Activated CD4-positive, alpha-beta T cell treated with anti-CD3 and anti-CD28 coated beads for 36 hours (primary cell): ENCODE measurements at regions of chr15 and their contacts with region 1.

Region 1: DNA sequence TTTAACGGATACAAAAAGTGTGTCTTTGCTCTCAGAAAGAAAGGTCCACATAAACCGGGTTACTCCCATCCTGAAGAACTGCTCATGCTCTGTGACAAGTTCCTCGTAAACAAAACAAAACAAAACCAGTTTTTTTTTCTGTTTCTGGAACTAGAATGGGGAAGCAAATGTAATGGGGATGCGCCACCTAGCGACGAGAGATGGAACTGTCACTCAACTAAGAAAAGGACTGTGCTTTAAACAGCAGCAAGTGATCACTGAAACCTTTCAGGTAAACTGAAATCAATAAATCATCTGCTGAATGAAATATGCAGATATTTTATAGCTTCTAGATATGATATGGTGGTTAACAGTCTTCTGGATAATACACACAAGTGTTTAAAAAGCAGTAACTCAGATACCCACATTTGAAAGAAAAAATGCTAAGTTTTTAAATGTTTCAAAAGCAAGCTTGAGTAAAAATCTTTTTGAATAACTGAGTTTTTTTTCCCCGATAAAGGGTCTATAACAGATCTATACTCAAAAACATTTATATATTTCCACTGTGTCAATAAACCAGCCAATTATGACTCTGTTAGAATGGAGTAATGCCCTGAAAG is 10.9 kb downstream of the TM2D3 start:
- DNase-seq: peak; percentile 85
- ATAC-seq: peak; percentile 60
- H3K4me3 Mint-ChIP-seq: no peak overlapping the region
- H3K27ac Mint-ChIP-seq: peak overlapping the region; percentile 78
- H3K4me1 Mint-ChIP-seq: peaks cover 33% of the 10 kb centered on the region
- H3K27me3 Mint-ChIP-seq: no peaks in the 10 kb centered on the region

Region 2: DNA sequence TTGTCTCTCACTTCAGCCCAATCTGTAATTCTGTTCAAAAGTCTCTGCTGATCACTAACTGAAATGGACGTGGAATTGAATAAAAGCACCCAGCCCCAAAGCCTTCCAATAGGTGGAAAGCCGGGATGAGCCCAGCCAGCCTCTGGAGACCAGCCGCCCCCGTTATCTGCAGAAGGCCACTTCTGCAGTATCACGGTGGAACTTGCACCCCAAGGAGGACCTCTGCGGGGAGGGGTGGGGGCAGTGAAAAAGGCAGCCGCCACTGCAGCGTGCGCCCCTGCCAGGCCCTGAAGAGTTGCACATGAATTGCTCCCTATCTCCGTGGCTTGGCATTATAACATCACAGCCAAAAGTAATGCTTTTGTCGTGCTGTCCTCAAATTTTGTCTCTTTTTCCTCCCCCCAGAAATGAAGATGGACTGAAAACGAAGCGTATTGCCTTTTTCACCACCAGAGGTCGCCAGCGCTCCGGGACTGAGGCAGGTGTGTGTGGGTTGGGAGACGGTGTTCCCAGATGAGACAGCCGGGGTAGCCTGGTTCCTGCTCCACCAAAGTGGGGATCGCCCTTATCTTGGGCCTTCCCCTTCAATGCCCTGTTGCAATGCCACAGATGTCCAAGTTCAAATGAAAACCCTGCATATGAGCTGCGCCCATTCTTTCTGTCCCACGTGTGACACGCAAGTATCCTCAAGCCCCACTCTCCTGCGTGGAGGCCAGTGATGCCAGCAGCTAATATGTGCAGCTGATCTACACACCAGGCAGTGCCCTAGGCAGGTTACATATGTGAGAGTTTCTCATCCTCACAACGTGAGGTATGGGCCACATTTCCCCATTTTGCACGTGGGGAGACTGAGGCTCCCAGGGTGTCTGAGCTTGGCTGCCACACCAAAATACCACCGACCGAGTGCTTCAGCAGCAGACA is 626.1 kb before region 1 on chr15:
- CTCF ChIA-PET with region 1: no interaction called
- POLR2A ChIA-PET with region 1: no interaction called
- intact Hi-C with region 1: loop called in 1 of 2 experiments (anchors 10 kb)
- DNase-seq: peak; percentile 84
- ATAC-seq: peak; percentile 58
- H3K4me3 Mint-ChIP-seq: no peak overlapping the region
- H3K27ac Mint-ChIP-seq: no peak overlapping the region
- H3K4me1 Mint-ChIP-seq: no peaks in the 10 kb centered on the region
- H3K27me3 Mint-ChIP-seq: peaks cover 2% of the 10 kb centered on the region

Region 3: DNA sequence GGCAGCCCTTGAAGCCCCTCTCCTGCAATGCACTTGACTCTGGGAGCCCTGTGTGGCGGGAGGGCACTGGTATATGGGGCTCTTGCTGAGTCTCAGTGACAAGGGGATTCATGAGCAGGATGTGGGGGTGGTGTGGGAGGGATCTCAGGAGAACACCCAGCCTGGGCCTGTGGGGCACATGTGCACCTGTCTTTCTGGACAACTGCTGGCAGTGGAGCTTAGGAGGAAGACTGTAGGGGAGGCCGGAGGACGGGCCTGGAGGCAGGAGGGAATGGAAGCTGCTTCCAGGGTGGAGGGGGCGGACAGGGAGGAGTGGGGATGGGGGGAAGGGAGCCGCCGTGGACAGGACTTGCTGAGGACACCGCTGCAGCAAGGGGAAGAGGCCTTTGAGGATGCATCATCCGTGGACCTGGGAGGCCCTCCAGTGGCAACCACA is 335.4 kb before region 1 on chr15:
- CTCF ChIA-PET with region 1: interaction called, 12 read pairs
- POLR2A ChIA-PET with region 1: no interaction called
- intact Hi-C with region 1: no loop called
- DNase-seq: no peak
- ATAC-seq: no peak
- H3K4me3 Mint-ChIP-seq: no peak overlapping the region
- H3K27ac Mint-ChIP-seq: no peak overlapping the region
- H3K4me1 Mint-ChIP-seq: no peaks in the 10 kb centered on the region
- H3K27me3 Mint-ChIP-seq: no peaks in the 10 kb centered on the region

Region 4: GRCh38 chr15:101501703-101502373 is 139.4 kb before region 1 on chr15:
- CTCF ChIA-PET with region 1: interaction called, 3 read pairs
- POLR2A ChIA-PET with region 1: no interaction called
- intact Hi-C with region 1: loop called in 1 of 2 experiments (anchors 5 kb)
- DNase-seq: peak; percentile 75
- ATAC-seq: peak; percentile 94
- H3K4me3 Mint-ChIP-seq: peak overlapping the region; percentile 21
- H3K27ac Mint-ChIP-seq: no peak overlapping the region
- H3K4me1 Mint-ChIP-seq: peaks cover 14% of the 10 kb centered on the region
- H3K27me3 Mint-ChIP-seq: peaks cover 21% of the 10 kb centered on the region

Region 5: DNA sequence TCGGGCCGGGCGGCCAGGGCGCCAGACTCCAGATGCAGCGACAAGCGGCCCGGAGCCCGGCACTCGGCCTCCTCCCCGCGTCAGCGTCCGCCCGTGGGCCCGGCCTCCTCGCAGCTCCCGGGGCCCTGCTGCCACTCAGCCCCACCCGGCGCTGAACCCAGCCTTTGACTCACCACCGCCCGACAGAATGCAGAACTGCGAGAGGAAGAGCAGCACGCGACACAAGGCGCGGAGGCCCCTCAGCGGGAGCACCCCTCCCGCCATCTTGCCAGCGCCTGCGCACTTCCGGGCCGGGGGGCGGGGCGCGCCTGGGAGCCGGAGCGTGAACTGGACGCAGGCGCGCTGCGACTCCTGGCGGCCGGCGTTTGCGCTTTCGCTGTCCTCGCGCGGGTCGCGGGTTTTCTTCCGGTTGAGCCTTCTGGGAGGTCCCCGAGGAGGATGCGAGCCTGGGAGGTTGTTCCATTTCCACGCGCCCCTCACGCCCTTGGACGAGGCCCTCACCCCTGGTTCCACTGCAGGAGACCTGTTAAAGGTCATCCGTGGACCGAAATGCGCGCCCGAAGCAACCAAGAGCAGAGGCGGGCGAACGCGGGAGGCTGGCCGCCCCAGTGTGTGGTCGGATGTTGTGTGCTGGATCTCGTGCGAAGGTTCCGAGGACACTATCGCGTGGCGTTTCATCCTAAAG is 11.0 kb after region 1 on chr15 and contains the start of gene TM2D3:
- CTCF ChIA-PET with region 1: interaction called, 15 read pairs
- POLR2A ChIA-PET with region 1: no interaction called
- intact Hi-C with region 1: loop called in 1 of 2 experiments (anchors 1 kb)
- DNase-seq: peak; percentile 96
- ATAC-seq: peak; percentile 96
- H3K4me3 Mint-ChIP-seq: peak within 1 kb of the TSS; percentile 91
- H3K27ac Mint-ChIP-seq: peak within 1 kb of the TSS; percentile 97
- H3K4me1 Mint-ChIP-seq: peaks cover 43% of the 10 kb centered on the region
- H3K27me3 Mint-ChIP-seq: no peaks in the 10 kb centered on the region
- total RNA-seq, gene TM2D3: 34.3 to 35.9 TPM

Region 6: GRCh38 chr15:101731746-101732145 is 90.5 kb after region 1 on chr15:
- CTCF ChIA-PET with region 1: no interaction called
- POLR2A ChIA-PET with region 1: no interaction called
- intact Hi-C with region 1: no loop called
- DNase-seq: no peak
- ATAC-seq: no peak
- H3K4me3 Mint-ChIP-seq: no peak overlapping the region
- H3K27ac Mint-ChIP-seq: no peak overlapping the region
- H3K4me1 Mint-ChIP-seq: no peaks in the 10 kb centered on the region
- H3K27me3 Mint-ChIP-seq: no peaks in the 10 kb centered on the region